B cell (primary cell): ENCODE measurements at regions of chr9 and their contacts with region 1.

Region 1: GRCh38 chr9:109411798-109412352 is 86.2 kb downstream of the PTPN3 start:
- DNase-seq: peak; percentile 70
- ATAC-seq: peak; percentile 46
- H3K4me3 ChIP-seq: no peak overlapping the region
- H3K4me3 Mint-ChIP-seq: peak overlapping the region; percentile 68
- H3K27ac ChIP-seq: no peak overlapping the region
- H3K27ac Mint-ChIP-seq: peak overlapping the region; percentile 70
- H3K4me1 ChIP-seq: peaks cover 9 to 30% of the 10 kb centered on the region in 2 donors
- H3K4me1 Mint-ChIP-seq: peaks cover 45% of the 10 kb centered on the region
- H3K27me3 ChIP-seq: no peaks in the 10 kb centered on the region
- H3K27me3 Mint-ChIP-seq: peaks cover 15% of the 10 kb centered on the region
- CTCF ChIP-seq: peak; percentile 69

Region 2: GRCh38 chr9:109119439-109120203 is 292.3 kb before region 1 on chr9 and contains the start of gene TMEM245:
- CTCF ChIA-PET with region 1: no interaction called
- POLR2A ChIA-PET with region 1: no interaction called
- intact Hi-C with region 1: loop called (anchors 10 kb)
- DNase-seq: peak; percentile 97
- ATAC-seq: peak; percentile 96
- H3K4me3 ChIP-seq: peak within 1 kb of the TSS; percentile 63 to 89 (median 74)
- H3K4me3 Mint-ChIP-seq: peak within 1 kb of the TSS; percentile 91
- H3K27ac ChIP-seq: peak within 1 kb of the TSS; percentile 24 to 81
- H3K27ac Mint-ChIP-seq: peak within 1 kb of the TSS; percentile 86
- H3K4me1 ChIP-seq: peaks cover 18 to 32% of the 10 kb centered on the region in 2 donors
- H3K4me1 Mint-ChIP-seq: peaks cover 30% of the 10 kb centered on the region
- H3K27me3 ChIP-seq: no peaks in the 10 kb centered on the region
- H3K27me3 Mint-ChIP-seq: no peaks in the 10 kb centered on the region
- CTCF ChIP-seq: no peak
- total RNA-seq, gene TMEM245: 33.4 and 34.3 TPM in 2 replicates

Region 3: GRCh38 chr9:109320742-109321448 is 91.0 kb before region 1 on chr9 and contains the start of gene EPB41L4B:
- CTCF ChIA-PET with region 1: interaction called, 4 read pairs
- POLR2A ChIA-PET with region 1: no interaction called
- intact Hi-C with region 1: loop called (anchors 5 kb)
- DNase-seq: peak; percentile 85
- ATAC-seq: peak; percentile 94
- H3K4me3 ChIP-seq: no peak within 1 kb of the TSS
- H3K4me3 Mint-ChIP-seq: peak within 1 kb of the TSS; percentile 89
- H3K27ac ChIP-seq: no peak within 1 kb of the TSS
- H3K27ac Mint-ChIP-seq: no peak within 1 kb of the TSS
- H3K4me1 ChIP-seq: peaks cover 12 to 13% of the 10 kb centered on the region in 2 donors
- H3K4me1 Mint-ChIP-seq: peaks cover 13% of the 10 kb centered on the region
- H3K27me3 ChIP-seq: peaks cover 0 to 53% (median 27%) of the 10 kb centered on the region in 4 experiments
- H3K27me3 Mint-ChIP-seq: peaks cover 68% of the 10 kb centered on the region
- CTCF ChIP-seq: peak; percentile 72
- total RNA-seq, gene EPB41L4B: 2.5 and 2.9 TPM in 2 replicates

Region 4: DNA sequence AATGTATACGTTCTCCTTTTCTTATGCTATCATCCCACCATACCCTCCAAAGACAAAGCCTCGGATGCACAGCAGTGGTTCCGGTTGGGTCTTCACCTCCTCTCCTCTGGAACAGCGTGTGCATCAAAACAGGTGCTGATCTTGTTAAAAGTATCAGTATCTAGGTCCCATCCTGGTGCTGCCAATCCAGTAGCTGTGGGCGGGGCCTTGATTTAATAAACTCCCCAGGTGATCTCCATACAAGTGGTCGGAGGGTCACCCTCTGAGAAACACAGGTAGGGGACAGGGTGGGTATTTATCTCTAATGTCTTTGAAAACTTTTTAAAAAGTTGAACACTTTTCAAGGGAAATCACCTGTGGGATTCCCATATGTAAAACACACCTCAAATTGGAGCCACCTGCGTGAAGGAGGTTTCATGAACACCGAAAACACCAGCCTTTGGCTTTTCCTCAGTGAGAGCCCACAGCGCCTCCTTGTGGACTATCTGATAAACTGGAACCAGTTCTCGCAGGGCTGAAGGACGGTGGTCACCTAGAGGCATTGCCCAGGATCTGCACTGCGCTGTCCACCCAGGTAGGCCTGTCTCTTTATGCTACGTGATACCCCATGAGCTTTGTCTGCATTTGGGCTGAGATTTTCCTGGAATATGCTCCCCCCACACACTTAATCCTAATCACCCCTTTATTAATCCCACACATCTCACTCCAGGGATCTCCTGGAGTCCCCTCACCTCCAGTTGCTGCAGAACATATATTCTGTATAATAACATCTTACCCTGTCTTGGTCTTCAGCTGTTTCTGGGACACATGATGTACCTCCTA is 10.5 kb before region 1 on chr9:
- CTCF ChIA-PET with region 1: interaction called, 24 read pairs
- POLR2A ChIA-PET with region 1: no interaction called
- intact Hi-C with region 1: loop called (anchors 1 kb)
- DNase-seq: peak; percentile 59
- ATAC-seq: peak; percentile 53
- H3K4me3 ChIP-seq: no peak overlapping the region
- H3K4me3 Mint-ChIP-seq: peak overlapping the region; percentile 35
- H3K27ac ChIP-seq: no peak overlapping the region
- H3K27ac Mint-ChIP-seq: no peak overlapping the region
- H3K4me1 ChIP-seq: peaks cover 0 to 21% of the 10 kb centered on the region in 2 donors
- H3K4me1 Mint-ChIP-seq: peaks cover 32% of the 10 kb centered on the region
- H3K27me3 ChIP-seq: peaks cover 0 to 9% (median 0%) of the 10 kb centered on the region in 4 experiments
- H3K27me3 Mint-ChIP-seq: peaks cover 15% of the 10 kb centered on the region
- CTCF ChIP-seq: peak; percentile 62

Region 5: DNA sequence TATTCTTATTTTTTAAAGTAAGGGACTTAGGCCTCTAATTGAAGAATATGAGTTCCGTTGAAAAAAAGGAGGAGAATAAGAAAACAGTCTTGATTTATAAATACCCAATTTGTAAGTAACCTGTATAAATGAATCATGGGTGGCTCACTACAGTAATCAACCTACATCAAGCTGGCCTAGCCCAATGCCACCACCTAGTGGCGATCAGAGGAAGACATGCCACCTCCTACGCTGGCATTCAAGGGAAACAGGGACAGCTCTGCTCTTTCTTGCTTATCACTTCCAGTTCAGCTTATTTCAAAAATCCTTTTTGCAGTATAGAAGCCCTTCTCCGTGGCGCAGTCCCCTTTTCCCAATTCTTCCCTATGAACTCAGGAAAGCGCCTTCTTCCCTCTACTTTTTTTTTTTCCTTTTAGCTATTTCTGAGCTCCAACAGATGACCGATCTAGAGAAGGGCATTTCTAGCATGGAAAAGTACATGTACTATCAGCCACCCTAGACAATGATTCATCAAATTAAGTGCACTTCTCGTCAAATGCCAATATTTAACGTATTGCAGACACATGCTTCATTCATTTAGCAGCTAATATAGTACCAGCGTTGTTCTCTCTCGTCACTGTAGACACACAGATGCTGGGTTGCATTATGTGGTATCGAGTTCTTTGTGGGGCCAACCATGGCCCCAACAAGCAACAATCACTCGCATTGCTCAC is 57.9 kb after region 1 on chr9:
- CTCF ChIA-PET with region 1: interaction called, 11 read pairs
- POLR2A ChIA-PET with region 1: no interaction called
- intact Hi-C with region 1: no loop called
- DNase-seq: peak; percentile 65
- ATAC-seq: peak; percentile 84
- H3K4me3 ChIP-seq: no peak overlapping the region
- H3K4me3 Mint-ChIP-seq: no peak overlapping the region
- H3K27ac ChIP-seq: no peak overlapping the region
- H3K27ac Mint-ChIP-seq: no peak overlapping the region
- H3K4me1 ChIP-seq: no peaks in the 10 kb centered on the region
- H3K4me1 Mint-ChIP-seq: no peaks in the 10 kb centered on the region
- H3K27me3 ChIP-seq: peaks cover 0 to 6% (median 4%) of the 10 kb centered on the region in 4 experiments
- H3K27me3 Mint-ChIP-seq: peaks cover 35% of the 10 kb centered on the region
- CTCF ChIP-seq: peak; percentile 93

Region 6: GRCh38 chr9:109590945-109591344 is 179.1 kb after region 1 on chr9:
- CTCF ChIA-PET with region 1: no interaction called
- POLR2A ChIA-PET with region 1: no interaction called
- intact Hi-C with region 1: no loop called
- DNase-seq: no peak
- ATAC-seq: no peak
- H3K4me3 ChIP-seq: no peak overlapping the region
- H3K4me3 Mint-ChIP-seq: no peak overlapping the region
- H3K27ac ChIP-seq: no peak overlapping the region
- H3K27ac Mint-ChIP-seq: no peak overlapping the region
- H3K4me1 ChIP-seq: no peaks in the 10 kb centered on the region
- H3K4me1 Mint-ChIP-seq: no peaks in the 10 kb centered on the region
- H3K27me3 ChIP-seq: peaks cover 0 to 7% (median 0%) of the 10 kb centered on the region in 4 experiments
- H3K27me3 Mint-ChIP-seq: peaks cover 29% of the 10 kb centered on the region
- CTCF ChIP-seq: no peak